ENCODE measurements at regions of chr1 and their contacts with region 1.

Region 1: DNA sequence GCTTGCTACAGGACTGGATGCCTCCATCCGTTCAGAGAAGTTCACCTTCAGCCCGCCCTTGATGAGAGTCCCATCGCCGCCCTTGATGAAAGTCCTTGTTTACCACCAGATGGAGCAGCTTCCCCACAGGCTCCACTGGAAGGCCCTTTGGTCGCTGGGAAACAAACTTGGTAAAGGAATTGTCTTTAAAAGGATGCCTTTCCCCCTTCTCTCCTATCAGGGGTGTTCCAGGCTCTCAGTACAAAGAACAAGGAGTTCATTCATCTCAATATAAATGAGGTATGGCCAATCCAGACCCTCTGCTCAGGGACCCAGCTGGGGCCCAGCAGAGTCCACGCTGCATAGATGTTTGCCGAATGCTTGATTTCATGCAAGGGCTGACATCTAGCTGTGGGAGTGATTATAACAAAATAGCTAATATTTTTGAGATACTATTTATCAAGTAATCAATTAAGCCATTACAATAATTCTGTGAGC is 50.8 kb downstream of the CAPN9 start:
- DNase-seq: no peak
- ATAC-seq: peak; percentile 96

Region 2: GRCh38 chr1:230917284-230918135 is 119.5 kb after region 1 on chr1:
- intact Hi-C with region 1: loop called (anchors 1 kb)
- DNase-seq: peak; percentile 77
- ATAC-seq: peak; percentile 95

Region 3: GRCh38 chr1:231211005-231211857 is 413.3 kb after region 1 on chr1:
- intact Hi-C with region 1: loop called (anchors 10 kb)
- DNase-seq: peak; percentile 82
- ATAC-seq: peak; percentile 94